ENCODE measurements at regions of chr1 and their contacts with region 1.

Region 1: GRCh38 chr1:226809785-226810571 is 60.4 kb upstream of the PSEN2 start:
- DNase-seq: peak; percentile 98
- H3K4me3 ChIP-seq: no peak overlapping the region
- CTCF ChIP-seq: peak; percentile 27

Region 2: GRCh38 chr1:226754793-226755533 is 55.0 kb before region 1 on chr1:
- in situ Hi-C with region 1: loop called (anchors 5 kb)
- DNase-seq: no peak
- H3K4me3 ChIP-seq: no peak overlapping the region
- CTCF ChIP-seq: no peak